ENCODE measurements at regions of chr1 and their contacts with region 1.

Region 1: GRCh38 chr1:40404670-40405462 is 31.3 kb downstream of the SMAP2 start:
- DNase-seq: peak; percentile 79
- ATAC-seq: peak; percentile 82
- H3K4me3 ChIP-seq: no peak overlapping the region
- H3K27ac ChIP-seq: no peak overlapping the region
- H3K4me1 ChIP-seq: peaks cover 2% of the 10 kb centered on the region; the same call in 1 of the 2 replicates
- H3K27me3 ChIP-seq: no peaks in the 10 kb centered on the region
- CTCF ChIP-seq: peak; percentile 80
- POLR2A ChIP-seq: no peak
- RAD21 ChIP-seq: peak; percentile 90

Region 2: DNA sequence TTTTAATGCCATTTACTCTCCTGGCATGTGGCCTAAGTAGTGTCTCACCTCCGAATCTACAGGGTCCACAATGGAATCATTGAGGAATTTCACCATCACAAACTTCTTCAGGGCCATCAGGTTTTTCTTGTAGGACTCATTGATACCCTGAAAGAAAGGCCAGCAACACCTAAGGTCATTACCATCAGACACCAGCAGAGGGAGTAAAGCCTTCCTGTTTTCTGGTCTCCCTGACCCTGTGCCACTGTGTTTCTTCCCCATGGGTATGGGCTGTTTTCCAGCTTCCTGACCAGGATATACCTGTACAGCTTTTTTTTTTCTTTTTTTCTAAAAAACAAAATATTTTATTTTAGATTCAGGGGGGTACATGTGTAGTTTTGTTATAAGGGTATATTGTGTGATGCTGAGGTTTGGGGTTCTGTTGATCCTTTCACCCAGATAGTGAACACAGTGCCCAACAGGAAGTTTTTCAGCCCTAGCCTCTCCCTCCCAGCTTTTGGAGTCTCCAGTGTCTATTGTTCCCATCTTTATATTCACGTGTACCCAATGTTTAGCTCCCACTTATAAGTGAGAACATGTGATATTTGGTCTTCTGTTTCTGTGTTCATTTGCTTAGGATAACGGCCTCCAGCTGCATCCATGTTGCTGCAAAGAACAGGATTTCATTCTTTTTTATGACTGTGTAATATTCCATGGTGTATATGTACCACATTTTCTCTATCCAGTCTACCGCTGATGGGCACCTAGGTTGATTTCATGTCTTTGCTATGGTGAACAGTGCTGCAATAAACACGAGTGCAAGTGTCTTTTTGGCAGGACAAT is 326.1 kb before region 1 on chr1:
- CTCF ChIA-PET with region 1: no interaction called
- POLR2A ChIA-PET with region 1: no interaction called
- dilution Hi-C with region 1: no loop called
- in situ Hi-C with region 1: no loop called
- intact Hi-C with region 1: loop called (anchors 5 kb)
- DNase-seq: peak; percentile 46
- ATAC-seq: peak; percentile 53; the same call in 1 of the 2 replicates
- H3K4me3 ChIP-seq: no peak overlapping the region
- H3K27ac ChIP-seq: no peak overlapping the region
- H3K4me1 ChIP-seq: peaks cover 5% of the 10 kb centered on the region
- H3K27me3 ChIP-seq: no peaks in the 10 kb centered on the region
- CTCF ChIP-seq: peak; percentile 59
- POLR2A ChIP-seq: no peak
- RAD21 ChIP-seq: peak; percentile 48

Region 3: DNA sequence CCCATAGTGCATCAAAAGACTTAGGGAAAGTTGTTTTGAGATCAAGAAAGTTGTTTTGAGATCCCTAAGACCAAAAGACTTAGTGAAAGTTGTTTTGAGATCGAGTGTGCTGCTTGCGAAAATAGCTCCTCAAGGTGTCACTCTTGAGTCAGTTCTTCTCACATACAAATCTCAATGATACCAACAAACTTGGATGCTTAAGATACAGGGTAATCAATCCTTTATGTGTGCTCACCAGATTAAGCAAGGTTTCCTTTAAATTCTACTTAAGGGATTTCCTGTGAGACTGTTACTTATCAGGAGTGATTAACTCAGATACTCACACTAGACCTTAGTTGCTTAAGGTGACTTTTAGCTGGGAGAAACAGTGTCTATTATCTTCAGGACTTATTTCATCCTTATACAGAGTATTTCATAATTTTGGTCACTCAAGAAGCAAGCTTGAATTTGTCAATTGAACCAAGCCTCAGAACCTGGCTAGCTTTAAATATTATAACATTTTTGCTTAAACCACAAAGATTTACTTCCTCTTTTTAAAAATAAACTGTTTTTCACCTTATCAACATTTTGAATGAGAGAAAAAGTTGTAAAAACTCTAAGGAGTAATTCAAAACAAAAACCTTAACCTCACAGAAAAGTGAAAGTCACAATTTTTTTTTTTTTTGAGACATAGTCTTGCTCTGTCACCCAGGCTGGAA is 251.6 kb before region 1 on chr1:
- CTCF ChIA-PET with region 1: interaction called, 9 read pairs
- POLR2A ChIA-PET with region 1: no interaction called
- dilution Hi-C with region 1: no loop called
- in situ Hi-C with region 1: loop called (anchors 5 kb)
- intact Hi-C with region 1: loop called (anchors 2 kb)
- DNase-seq: peak; percentile 77
- ATAC-seq: peak; percentile 85
- H3K4me3 ChIP-seq: no peak overlapping the region
- H3K27ac ChIP-seq: no peak overlapping the region
- H3K4me1 ChIP-seq: no peaks in the 10 kb centered on the region
- H3K27me3 ChIP-seq: peaks cover 14% of the 10 kb centered on the region
- CTCF ChIP-seq: peak; percentile 81
- POLR2A ChIP-seq: no peak
- RAD21 ChIP-seq: peak; percentile 74

Region 4: DNA sequence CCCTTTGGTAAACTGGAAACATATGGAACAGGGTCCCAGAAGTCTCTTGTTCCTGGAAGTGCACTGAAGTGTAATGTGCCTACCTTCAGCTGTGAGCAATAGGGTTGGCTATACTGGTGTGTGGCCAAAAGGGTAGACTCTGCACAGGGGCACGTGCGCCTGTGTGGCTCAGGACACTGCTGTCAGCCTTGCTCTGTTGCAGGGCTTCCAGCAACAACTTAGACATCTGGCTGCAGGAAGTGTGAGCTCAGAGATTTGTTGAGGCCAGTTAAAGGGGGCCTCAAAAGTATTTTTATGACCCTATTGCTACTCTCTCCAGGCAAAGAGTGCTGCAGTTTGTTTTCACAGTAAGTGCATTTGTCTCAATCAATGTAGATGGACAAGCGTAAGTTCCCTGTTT is 582.1 kb after region 1 on chr1:
- CTCF ChIA-PET with region 1: no interaction called
- POLR2A ChIA-PET with region 1: no interaction called
- dilution Hi-C with region 1: no loop called
- in situ Hi-C with region 1: no loop called
- intact Hi-C with region 1: no loop called
- DNase-seq: no peak
- ATAC-seq: no peak
- H3K4me3 ChIP-seq: no peak overlapping the region
- H3K27ac ChIP-seq: no peak overlapping the region
- H3K4me1 ChIP-seq: peaks cover 17% of the 10 kb centered on the region
- H3K27me3 ChIP-seq: no peaks in the 10 kb centered on the region
- CTCF ChIP-seq: no peak
- POLR2A ChIP-seq: no peak
- RAD21 ChIP-seq: no peak

Measured in IMR-90 (cell line).